AG04449 (cell line): ENCODE measurements at regions of chr3 and their contacts with region 1.

Region 1: GRCh38 chr3:11155341-11156025 is 1.2 kb downstream of the HRH1 start:
- DNase-seq: no peak
- H3K4me3 ChIP-seq: peak overlapping the region; percentile 80
- CTCF ChIP-seq: peak; percentile 97

Region 2: DNA sequence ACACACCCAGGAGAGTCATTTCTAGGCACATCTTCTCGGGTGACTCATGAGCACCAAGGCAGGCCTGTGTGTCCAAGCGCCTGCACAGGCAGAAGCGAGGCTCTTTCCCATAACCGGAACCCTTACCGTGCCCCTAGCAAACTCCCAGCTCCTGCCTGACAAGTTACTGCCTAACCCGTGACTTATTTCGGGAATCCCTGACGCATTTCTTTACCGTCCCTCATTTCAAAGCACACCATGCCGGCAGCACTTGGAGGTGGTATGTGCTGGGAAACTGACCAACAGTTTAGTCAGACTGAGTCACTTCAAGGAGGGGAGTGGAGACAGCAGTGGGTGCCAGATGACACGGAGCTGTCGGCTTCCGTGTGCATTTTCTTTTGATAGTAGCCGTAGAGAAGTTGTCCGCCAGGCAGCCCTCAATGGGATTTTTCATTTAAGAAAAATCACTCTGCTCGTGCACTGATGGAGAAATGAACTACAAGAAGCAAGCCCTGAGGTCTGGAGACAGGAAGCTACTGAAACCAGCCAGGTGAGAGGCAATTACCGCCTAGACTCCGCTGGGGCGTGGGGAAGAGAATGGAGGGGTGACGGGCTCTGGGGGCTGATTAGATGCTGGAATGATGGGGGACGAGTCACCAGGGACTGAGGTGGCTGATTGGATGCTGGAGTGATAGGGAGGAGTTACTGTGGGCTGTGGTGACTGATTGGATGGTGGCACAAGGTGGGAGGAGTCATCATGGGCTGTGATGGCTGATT is 18.4 kb before region 1 on chr3:
- CTCF ChIA-PET with region 1: interaction called, 17 read pairs
- POLR2A ChIA-PET with region 1: interaction called, 10 read pairs
- DNase-seq: peak; percentile 100
- H3K4me3 ChIP-seq: peak overlapping the region; percentile 61
- CTCF ChIP-seq: no peak

Region 3: DNA sequence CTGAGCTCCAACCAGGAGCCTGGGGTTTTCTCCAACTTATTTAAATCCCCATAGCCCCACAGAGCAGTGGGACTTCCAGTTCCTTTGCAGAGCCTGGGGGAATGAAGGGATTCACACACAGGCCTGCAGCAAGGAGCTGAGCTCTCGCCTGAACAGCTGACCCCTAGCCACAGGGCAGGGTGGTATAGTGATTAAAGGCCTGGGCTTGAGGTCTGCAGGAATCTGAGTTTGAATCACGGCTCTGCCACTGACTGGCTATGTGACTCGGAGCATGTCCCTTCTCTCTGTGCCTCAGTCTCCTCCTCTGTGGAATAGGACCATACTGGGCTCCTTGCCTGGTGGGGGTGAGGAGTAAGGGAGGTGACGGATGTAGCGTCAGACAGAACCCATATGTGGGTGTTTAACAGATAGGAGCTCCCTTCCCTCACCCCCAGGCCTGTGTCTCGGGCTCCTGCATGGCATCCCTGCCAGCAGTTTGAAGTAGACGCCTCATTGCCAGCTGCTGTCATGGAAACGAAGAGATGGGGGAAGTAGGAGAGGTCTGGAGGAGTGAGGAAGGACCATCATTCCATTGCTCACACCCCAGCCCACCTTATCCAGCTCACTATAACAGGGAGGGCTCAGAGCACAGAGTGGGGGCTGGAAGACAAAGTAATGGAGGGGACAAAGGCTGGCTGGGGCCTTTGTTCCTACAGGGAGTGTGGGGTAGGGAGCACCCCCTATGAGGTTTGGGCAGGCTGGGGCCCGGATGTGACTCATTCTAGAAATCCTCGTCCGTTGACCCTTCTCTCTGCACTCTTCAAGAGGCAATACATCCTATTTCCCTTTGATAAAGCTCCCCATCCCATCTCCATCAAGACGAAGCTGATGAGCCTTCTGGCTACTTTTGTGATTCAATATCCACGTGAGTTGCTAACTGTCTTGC is 13.7 kb after region 1 on chr3:
- CTCF ChIA-PET with region 1: interaction called, 33 read pairs
- POLR2A ChIA-PET with region 1: interaction called, 3 read pairs
- DNase-seq: no peak
- H3K4me3 ChIP-seq: no peak overlapping the region
- CTCF ChIP-seq: no peak

Region 4: GRCh38 chr3:11195721-11196332 is 40.3 kb after region 1 on chr3:
- CTCF ChIA-PET with region 1: interaction called, 23 read pairs
- POLR2A ChIA-PET with region 1: interaction called, 4 read pairs
- DNase-seq: no peak
- H3K4me3 ChIP-seq: peak overlapping the region; percentile 38
- CTCF ChIP-seq: peak; percentile 1

Region 5: DNA sequence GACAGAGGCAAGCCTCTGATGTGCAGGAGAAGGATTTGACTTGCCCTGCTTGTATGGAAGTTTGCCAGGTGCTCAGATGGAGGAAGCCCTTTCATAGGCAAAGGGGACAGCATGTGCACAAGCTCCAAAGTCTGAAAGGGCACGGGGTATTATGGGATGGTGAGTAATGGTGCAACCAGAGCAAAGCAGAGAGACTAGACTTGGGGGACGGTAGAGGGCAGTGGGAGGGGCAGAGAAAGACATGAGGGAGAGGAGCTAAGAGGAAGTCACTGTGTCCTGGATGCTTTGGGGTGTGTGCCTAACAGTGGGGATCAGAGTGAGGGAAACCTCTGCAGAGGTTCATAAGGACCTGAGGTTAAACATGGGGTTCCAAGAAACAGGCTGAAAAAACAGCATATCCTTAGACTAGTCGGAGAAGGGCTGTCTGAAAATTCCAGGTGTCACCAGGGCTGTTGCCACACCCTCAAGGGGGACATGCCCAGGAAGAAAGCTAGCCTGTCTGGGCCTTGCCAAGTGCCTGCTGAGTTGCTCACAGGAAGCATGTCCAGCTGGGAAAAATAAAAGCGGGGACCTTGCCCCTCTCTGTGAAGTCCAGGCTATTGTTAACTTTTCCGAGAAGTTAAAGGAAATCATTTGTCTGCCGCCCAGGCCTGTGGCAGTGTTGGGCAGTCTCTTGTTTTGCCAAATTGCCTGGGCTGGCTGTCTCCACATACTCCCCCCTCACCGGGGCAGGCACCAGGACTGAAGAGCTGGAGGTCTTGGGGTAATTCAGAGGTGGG is 46.0 kb after region 1 on chr3:
- CTCF ChIA-PET with region 1: interaction called, 23 read pairs
- POLR2A ChIA-PET with region 1: no interaction called
- DNase-seq: no peak
- H3K4me3 ChIP-seq: no peak overlapping the region
- CTCF ChIP-seq: no peak

Region 6: GRCh38 chr3:11211531-11212298 is 56.2 kb after region 1 on chr3:
- CTCF ChIA-PET with region 1: interaction called, 21 read pairs
- POLR2A ChIA-PET with region 1: interaction called, 3 read pairs
- DNase-seq: no peak
- H3K4me3 ChIP-seq: peak overlapping the region; percentile 13; the same call in 1 of the 2 replicates
- CTCF ChIP-seq: peak; percentile 36

Region 7: DNA sequence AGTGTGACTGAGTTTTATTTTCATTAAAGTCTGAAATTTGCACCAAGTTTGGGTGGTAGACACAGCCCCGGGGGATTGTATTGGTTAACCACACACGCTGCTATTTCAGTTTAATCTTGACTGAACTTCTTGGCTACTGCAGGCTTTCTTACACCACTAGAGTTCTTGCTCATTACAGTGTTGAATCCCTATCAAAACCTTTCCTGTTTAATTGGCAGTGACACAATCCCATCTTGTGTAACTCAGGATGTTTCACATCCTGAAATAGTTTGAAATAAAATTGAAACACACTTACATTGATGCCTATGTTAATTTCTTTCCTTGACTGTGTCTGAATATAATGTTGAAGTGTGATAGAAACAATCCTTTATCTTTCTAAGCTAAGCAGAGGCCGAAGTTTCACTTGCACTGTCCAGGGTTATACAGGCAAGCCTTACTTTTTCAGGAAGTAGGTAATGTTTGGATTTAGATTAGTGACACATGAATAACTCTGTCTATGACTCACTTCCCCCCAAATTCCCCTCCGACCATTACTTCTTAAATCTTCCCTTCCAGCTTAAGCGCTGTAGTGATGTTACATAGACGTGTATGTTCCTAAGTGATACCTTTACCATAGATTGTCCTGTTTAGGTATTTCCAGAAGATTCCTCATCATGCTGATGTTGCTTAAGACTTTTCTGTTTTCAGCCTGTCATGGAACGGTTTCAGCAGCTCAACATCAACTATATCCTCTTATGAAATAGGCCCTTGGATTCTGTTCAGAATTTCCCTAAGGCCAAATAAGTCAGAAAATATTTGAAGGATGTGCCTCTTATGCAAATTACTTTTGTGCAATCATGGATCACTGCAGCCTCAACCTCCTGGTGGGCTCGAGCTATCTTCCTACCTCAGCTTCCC is 133.6 kb after region 1 on chr3:
- CTCF ChIA-PET with region 1: interaction called, 32 read pairs
- POLR2A ChIA-PET with region 1: interaction called, 3 read pairs
- DNase-seq: peak; percentile 78
- H3K4me3 ChIP-seq: peak overlapping the region; percentile 26; the same call in 1 of the 2 replicates
- CTCF ChIP-seq: no peak